Keratinocyte (primary cell): ENCODE measurements at regions of chr7 and their contacts with region 1.

Region 1: DNA sequence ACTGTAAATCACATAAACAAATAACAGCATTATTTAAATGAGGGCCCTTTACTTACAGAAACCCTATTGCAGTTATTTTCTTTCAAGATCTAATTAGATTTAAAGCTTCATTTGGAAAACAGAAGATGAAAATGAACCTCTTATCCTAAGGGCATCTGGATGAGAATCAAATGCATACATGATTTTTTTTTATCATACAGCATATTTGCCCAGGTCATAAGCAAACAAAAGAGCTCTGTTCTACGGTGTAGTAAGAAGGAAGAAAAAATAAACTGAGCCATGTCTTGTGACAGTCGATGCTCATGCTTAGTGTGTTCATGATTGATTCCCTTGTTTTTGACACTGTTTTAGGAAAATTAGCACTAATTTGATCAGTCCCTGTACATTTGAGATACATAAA is 202.6 kb upstream of the RNF32 start:
- DNase-seq: no peak
- H3K4me3 ChIP-seq: no peak overlapping the region
- H3K27ac ChIP-seq: no peak overlapping the region
- H3K4me1 ChIP-seq: no peaks in the 10 kb centered on the region
- H3K27me3 ChIP-seq: no peaks in the 10 kb centered on the region
- CTCF ChIP-seq: no peak

Region 2: DNA sequence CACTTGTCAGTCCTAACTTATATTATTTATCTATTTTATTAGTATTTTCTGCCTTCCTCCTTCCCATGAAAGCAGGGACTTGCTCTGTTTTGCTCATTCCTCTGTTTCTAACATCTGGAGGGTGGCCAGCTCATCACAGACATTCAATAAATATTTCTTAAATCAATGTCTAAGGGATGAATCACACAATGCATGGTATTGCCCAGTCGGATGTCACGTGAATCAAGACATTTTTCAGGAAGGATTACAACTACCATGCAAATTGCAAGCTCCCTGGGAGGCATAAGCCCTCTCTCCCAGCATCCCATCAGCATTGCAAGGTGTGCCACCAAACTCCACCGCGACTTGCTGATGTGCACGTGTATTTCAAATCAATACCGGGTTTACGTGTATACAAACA is 55.9 kb after region 1 on chr7:
- dilution Hi-C with region 1: loop called (anchors 10 kb)
- DNase-seq: no peak
- H3K4me3 ChIP-seq: no peak overlapping the region
- H3K27ac ChIP-seq: no peak overlapping the region
- H3K4me1 ChIP-seq: no peaks in the 10 kb centered on the region
- H3K27me3 ChIP-seq: no peaks in the 10 kb centered on the region
- CTCF ChIP-seq: no peak